ENCODE measurements at regions of chr12 and their contacts with region 1.

Region 1: DNA sequence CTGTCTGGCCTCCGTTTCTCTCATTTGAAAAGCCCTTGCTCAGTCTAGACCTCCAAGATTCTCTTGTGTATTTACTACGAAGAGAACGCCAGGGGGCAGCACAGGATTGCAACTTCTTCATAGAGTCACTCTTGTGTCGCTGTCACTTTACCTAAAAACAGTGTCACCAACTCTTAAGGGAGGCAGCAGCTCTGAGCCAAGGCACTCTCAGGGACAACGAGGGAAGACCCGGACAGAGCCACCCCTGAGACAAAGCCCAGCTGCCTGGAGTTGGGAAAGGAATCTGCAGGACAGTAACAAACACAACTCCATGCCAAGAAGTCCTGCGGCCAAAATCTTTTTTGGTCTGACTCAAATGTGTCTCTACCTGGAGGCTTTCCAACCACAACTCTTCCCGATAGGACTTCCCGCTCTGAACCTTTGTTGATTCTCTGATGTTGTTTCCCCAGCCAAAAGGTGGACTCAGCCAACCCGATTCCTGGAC is 9.6 kb upstream of the RPAP3 start:
- DNase-seq: peak; percentile 76 to 84
- ATAC-seq: peak; percentile 79 to 88 (median 86)
- H3K4me3 ChIP-seq: no peak overlapping the region
- H3K27ac ChIP-seq: no peak overlapping the region
- H3K4me1 ChIP-seq: peaks cover 27% of the 10 kb centered on the region
- H3K27me3 ChIP-seq: no peaks in the 10 kb centered on the region
- CTCF ChIP-seq: peak; percentile 80

Region 2: DNA sequence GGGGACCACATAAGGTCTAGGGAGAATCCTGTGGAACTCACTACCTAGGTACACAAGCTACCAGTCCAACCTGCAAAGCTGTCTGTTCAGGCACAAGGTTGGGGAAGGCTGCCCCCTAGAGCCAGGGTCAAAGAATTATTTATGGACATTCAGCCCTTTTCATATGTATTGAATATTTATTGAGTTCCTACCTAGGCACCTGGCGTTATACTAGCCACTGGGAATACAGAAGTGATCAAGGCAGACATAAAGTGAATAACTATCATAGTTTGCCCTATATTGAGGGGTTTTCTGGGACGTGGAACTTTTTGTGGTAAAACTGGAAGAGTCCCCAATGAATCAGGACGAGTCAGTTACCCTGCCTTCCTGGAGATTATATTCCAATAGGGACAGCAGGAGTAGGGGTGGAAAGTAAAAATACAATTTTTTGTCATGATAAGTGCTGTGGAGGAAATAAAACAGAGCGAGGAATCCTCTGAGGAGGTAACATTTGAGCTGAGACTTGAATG is 51.8 kb after region 1 on chr12:
- intact Hi-C with region 1: loop called (anchors 2 to 5 kb)
- DNase-seq: peak in 1 of 2 donors; percentile 64
- ATAC-seq: peak; percentile 63 to 81 (median 70)
- H3K4me3 ChIP-seq: no peak overlapping the region
- H3K27ac ChIP-seq: no peak overlapping the region
- H3K4me1 ChIP-seq: peaks cover under 1% of the 10 kb centered on the region
- H3K27me3 ChIP-seq: no peaks in the 10 kb centered on the region
- CTCF ChIP-seq: peak; percentile 67

Region 3: GRCh38 chr12:47779301-47779942 is 64.0 kb after region 1 on chr12:
- intact Hi-C with region 1: loop called in 1 of 2 experiments (anchors 1 kb)
- DNase-seq: peak; percentile 88 to 94
- ATAC-seq: peak; percentile 74 to 85 (median 80)
- H3K4me3 ChIP-seq: no peak overlapping the region
- H3K27ac ChIP-seq: no peak overlapping the region
- H3K4me1 ChIP-seq: peaks cover 46% of the 10 kb centered on the region
- H3K27me3 ChIP-seq: no peaks in the 10 kb centered on the region
- CTCF ChIP-seq: peak; percentile 97

Region 4: DNA sequence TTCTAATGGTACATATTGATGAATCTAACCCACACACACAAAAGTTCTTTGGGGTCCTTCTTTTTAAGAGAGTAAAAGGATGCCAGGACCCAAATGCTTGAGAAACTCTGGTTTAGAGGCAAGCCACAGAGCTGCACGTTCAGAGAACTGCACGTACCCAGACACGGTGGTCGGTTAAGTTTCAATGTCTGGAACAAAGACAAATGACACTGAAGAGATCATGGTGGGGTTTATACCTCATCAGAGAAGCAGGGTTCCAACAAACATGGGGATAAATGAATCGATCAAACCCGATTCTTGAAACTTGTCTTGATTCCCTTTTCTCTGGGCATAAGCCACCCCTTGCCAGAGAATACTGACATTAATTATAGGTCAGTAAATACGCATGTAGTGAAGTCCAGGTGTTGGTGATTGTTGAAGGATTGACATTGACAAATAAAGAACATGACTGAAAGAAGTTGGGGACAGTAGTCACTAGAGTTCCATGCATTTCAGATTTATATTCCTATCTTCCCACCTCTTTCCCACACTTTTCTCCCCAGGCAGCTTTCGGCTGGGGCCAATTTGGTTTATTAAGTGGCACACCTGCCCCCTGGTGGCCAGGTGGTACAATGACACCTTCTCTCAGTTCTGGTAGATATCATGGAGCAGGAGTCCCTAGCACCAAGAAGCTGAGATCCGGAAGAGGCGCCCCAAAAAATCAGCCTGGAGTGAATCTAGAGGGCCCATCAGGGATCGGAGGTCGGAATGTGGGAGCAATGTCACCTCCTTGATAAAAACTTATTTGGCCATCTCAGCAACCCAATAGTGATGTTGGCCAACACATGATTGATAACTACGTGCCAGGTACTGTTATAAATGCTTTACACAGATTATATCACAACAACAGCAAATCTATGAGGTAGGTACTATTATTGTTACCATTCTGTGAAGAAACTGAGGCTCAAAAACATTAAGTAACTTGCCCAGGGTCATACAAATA is 122.0 kb after region 1 on chr12:
- intact Hi-C with region 1: loop called (anchors 1 to 2 kb)
- DNase-seq: peak; percentile 77 to 78
- ATAC-seq: peak; percentile 75 to 90 (median 78)
- H3K4me3 ChIP-seq: no peak overlapping the region
- H3K27ac ChIP-seq: no peak overlapping the region
- H3K4me1 ChIP-seq: peaks cover 29% of the 10 kb centered on the region
- H3K27me3 ChIP-seq: no peaks in the 10 kb centered on the region
- CTCF ChIP-seq: peak; percentile 97

Region 5: GRCh38 chr12:47920913-47921312 is 205.5 kb after region 1 on chr12:
- intact Hi-C with region 1: no loop called
- DNase-seq: no peak
- ATAC-seq: no peak
- H3K4me3 ChIP-seq: no peak overlapping the region
- H3K27ac ChIP-seq: no peak overlapping the region
- H3K4me1 ChIP-seq: no peaks in the 10 kb centered on the region
- H3K27me3 ChIP-seq: no peaks in the 10 kb centered on the region
- CTCF ChIP-seq: no peak

Region 6: DNA sequence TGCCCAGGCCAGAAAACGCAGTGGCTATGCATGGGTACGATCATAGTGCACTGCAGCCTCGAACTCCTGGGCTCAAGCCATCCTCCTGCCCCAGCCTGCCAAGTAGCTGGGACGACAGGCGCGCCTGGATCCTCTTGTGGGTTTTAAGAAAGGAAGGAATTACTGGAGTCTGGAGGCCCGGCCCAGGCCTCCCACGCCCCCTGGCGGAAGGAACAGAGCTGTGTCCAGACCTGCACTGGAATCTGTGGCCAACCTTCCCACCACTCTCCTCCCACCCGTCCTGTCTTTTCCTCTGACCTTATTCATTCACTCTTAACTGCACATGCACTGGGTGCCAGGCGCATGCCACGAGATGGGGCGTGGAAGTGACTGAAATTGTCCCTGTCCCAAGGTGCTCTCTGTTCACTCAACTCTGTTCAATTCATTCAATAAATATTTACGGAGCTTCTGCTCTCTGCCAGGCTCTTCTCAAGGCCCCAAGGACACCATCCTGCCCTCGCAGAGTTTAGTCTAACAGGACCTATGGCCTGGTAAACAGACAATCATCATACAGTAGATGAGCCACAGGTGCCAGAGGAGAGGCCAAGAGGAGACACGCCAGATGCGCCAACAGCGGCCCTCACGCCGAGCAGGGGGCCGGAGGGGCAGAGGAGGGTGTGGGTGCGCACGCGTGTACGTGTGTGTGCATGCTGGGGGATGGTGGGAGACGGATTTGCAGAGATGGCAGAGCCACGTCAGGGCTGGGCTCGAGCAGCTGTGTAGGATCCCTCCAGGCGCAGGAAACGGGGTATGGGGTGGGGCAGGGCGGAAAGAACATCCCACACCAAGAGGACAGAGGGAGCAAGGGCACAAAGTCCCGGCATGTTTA is 234.2 kb after region 1 on chr12:
- intact Hi-C with region 1: loop called in 1 of 2 experiments (anchors 5 kb)
- DNase-seq: peak; percentile 79 to 84
- ATAC-seq: peak; percentile 85 to 96 (median 88)
- H3K4me3 ChIP-seq: no peak overlapping the region
- H3K27ac ChIP-seq: no peak overlapping the region
- H3K4me1 ChIP-seq: no peaks in the 10 kb centered on the region
- H3K27me3 ChIP-seq: no peaks in the 10 kb centered on the region
- CTCF ChIP-seq: peak; percentile 75